Endothelial cell of umbilical vein (primary cell): ENCODE measurements at regions of chr4 and their contacts with region 1.

Region 1: DNA sequence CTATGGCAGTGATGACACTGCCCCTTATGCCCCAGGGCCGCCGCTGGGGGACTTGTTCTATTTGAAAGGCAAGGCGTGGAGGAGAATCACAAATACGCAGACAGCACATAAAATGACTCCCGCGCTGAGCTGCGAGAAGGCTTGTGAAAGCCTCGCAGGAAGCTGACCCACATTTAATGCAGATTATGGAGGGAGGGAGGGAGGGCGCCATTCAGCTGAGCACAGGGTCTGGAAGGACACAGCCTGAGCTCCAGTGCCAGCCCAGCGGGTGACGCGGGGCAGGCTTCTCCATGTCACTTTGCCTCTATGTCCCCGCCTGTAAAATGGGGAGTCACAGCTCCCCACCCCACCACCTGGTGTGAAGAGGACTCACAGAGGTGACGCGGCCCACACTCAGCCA is 14.3 kb downstream of the ABLIM2 start:
- DNase-seq: no peak
- H3K4me3 ChIP-seq: no peak overlapping the region
- H3K27ac ChIP-seq: no peak overlapping the region
- H3K4me1 ChIP-seq: no peaks in the 10 kb centered on the region
- H3K27me3 ChIP-seq: no peaks in the 10 kb centered on the region
- CTCF ChIP-seq: no peak
- POLR2A ChIP-seq: no peak

Region 2: DNA sequence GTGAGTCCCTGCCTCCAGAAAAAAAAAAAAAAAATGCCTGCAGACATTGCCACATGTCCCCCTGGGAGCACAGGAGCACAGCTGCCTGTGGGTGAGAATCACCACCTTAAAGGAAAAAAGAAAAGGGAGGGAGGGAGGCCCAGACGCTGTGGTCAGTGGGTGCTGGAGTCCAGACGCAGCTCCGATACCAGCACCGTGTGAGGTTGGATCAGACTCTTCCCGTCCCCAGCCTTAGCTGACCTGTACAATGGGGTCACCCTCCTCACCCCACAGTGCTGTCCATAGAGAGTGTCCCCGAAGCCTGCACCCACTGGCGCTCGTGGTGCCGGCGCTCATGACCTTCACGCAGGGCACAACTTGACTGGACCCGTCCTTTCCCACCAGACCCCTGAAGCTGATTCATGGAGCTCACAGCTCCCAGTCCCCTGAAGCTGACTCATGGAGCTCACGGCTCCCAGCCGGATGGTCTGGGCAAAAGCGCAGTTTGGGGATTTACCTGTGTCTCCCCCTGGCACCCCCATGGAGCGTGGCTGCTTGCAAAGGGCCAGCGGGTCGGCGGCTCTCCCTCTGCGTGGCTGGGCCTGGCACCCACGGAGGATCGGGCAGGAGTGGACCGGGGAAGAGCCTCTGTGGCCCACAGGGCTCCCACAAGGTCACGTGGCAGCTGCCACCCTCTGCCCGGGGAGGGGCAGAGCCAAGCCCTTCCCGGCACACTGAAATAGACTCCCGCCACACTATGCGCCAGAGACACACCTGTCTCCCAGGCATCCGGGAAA is 17.1 kb before region 1 on chr4:
- CTCF ChIA-PET with region 1: interaction called, 3 read pairs
- POLR2A ChIA-PET with region 1: no interaction called
- dilution Hi-C with region 1: no loop called
- intact Hi-C with region 1: loop called (anchors 1 kb)
- DNase-seq: no peak
- H3K4me3 ChIP-seq: no peak overlapping the region
- H3K27ac ChIP-seq: no peak overlapping the region
- H3K4me1 ChIP-seq: no peaks in the 10 kb centered on the region
- H3K27me3 ChIP-seq: no peaks in the 10 kb centered on the region
- CTCF ChIP-seq: no peak
- POLR2A ChIP-seq: no peak